Transverse colon (tissue), 4 donors: ENCODE measurements at regions of chr9 and their contacts with region 1.

Region 1: DNA sequence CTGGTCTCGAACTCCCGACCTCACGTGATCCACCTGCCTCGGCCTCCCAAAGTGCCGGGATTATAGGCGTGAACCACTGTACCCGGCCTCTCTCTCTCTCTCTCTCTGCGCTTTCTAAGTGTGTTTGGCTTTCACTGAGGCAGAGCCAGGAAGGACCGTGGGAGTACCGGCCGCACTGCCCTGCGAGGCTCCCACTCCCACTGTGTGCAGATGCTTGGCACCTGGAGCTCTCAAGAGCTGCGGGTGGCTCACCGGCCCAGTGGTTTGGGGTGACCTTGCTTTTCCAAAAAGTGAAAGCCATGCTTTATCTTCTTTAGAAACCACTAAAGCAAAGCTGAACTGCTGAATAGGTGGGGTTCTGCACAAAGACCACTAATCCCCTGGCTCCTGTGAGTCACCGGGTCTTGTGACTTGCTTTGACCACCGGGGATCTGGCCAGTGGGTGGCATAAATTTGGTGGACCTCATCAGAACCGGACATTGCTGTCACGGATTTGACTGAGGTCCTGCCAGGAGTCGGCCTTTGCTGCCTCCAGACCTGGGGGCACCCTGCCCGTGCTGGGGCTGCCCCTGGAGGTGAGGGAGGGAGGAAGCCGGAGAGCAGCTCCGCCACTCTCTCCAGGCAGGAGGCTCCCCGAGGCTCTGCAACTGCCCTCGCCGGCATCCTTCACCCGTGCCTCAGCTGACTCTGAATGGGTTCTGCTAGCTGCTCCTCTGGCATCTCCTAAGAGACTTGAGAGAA is 228.9 kb downstream of the FANCC start:
- DNase-seq: no peak
- H3K4me3 ChIP-seq: no peak overlapping the region
- H3K27ac ChIP-seq: peak overlapping the region; percentile 83 to 92 (median 90)
- H3K4me1 ChIP-seq: peaks cover 37 to 67% (median 52%) of the 10 kb centered on the region in 4 donors
- H3K27me3 ChIP-seq: no peaks in the 10 kb centered on the region
- CTCF ChIP-seq: no peak
- EP300 ChIP-seq: no peak
- POLR2A ChIP-seq: no peak

Region 2: GRCh38 chr9:95025213-95026147 is 63.1 kb before region 1 on chr9:
- in situ Hi-C with region 1: no loop called
- intact Hi-C with region 1: no loop called
- DNase-seq: peak; percentile 62
- H3K4me3 ChIP-seq: no peak overlapping the region
- H3K27ac ChIP-seq: peak overlapping the region; percentile 60 to 78 (median 74)
- H3K4me1 ChIP-seq: peaks cover 31 to 88% (median 58%) of the 10 kb centered on the region in 4 donors
- H3K27me3 ChIP-seq: no peaks in the 10 kb centered on the region
- CTCF ChIP-seq: peak; percentile 28 to 51 (median 33)
- EP300 ChIP-seq: no peak
- POLR2A ChIP-seq: no peak

Region 3: DNA sequence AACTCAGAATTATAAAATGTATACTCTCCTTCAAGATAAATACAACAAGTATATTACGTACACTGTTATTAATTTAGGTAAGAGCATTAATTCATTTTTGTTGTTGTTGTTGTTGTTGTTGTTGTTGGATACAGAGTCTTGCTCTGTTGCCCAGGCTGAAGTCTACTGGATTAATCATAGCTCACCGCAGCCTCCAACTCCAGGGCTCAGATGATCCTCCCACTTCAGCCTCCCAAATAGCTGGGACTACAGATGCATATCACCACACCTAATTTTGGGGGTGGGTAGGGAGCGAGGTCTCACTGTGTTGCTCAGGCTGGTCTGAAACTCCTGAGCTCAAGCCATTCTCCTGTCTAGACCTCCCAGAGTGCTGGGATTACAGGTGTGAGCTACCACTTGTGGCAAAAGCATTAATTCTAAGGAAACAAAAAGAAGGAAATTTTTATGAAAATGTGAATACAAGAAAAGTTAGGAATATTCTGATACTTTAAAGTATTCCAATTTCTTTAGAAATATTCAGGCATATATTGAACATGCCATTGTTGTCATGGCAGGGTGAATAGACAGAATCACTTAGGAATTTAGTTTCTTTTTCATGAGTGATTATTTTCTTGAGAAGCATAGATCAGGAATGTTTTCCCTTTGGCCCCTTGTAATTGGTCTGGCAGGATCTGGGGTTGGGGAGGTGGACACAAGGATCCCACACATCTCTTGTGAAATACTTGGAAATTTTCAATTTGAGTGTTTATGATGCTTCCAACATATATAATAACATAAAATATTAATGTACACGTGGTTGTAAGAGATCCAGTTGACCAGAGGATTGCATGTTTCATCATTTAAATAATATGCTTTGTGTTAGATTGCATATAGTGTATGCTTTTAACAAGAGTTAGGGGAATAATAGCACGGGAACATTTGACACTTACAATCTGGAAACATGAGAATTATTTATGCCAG is 34.7 kb before region 1 on chr9:
- in situ Hi-C with region 1: no loop called
- intact Hi-C with region 1: loop called (anchors 1 kb)
- DNase-seq: no peak
- H3K4me3 ChIP-seq: no peak overlapping the region
- H3K27ac ChIP-seq: peak overlapping the region; percentile 77 to 91 (median 87)
- H3K4me1 ChIP-seq: peaks cover 5 to 72% (median 46%) of the 10 kb centered on the region in 4 donors
- H3K27me3 ChIP-seq: no peaks in the 10 kb centered on the region
- CTCF ChIP-seq: no peak
- EP300 ChIP-seq: no peak
- POLR2A ChIP-seq: no peak